Heart right ventricle (tissue), 16 donors: ENCODE measurements at regions of chr17 and their contacts with region 1.

Region 1: GRCh38 chr17:81253358-81254131 is 14.4 kb downstream of the NDUFAF8 start:
- DNase-seq: peak in 1 of 2 donors; percentile 54
- ATAC-seq: peak in 5 of 8 donors; percentile 35 to 55 (median 46)
- H3K4me3 ChIP-seq: no peak overlapping the region
- H3K27ac ChIP-seq: no peak overlapping the region
- H3K4me1 ChIP-seq: peaks cover 4 to 24% (median 13%) of the 10 kb centered on the region in 9 donors
- H3K27me3 ChIP-seq: no peaks in the 10 kb centered on the region
- CTCF ChIP-seq: peak; percentile 67 to 86 (median 79)

Region 2: GRCh38 chr17:80970044-80970761 is 283.3 kb before region 1 on chr17:
- intact Hi-C with region 1: no loop called
- DNase-seq: peak; percentile 51 to 57
- ATAC-seq: peak; percentile 66 to 84 (median 76)
- H3K4me3 ChIP-seq: no peak overlapping the region
- H3K27ac ChIP-seq: peak overlapping the region in 1 of 10 donors; percentile 19
- H3K4me1 ChIP-seq: peaks cover 4 to 27% (median 20%) of the 10 kb centered on the region in 9 donors
- H3K27me3 ChIP-seq: peaks cover 0 to 42% (median 15%) of the 10 kb centered on the region in 7 donors
- CTCF ChIP-seq: peak in 8 of 9 donors; percentile 43 to 72 (median 62)

Region 3: GRCh38 chr17:81222906-81223761 is 30.4 kb before region 1 on chr17 and contains the start of gene CEP131:
- intact Hi-C with region 1: no loop called
- DNase-seq: peak; percentile 99 to 100
- ATAC-seq: peak; percentile 98 to 100 (median 99)
- H3K4me3 ChIP-seq: peak within 1 kb of the TSS; percentile 69 to 93 (median 84)
- H3K27ac ChIP-seq: peak within 1 kb of the TSS in 4 of 10 donors; percentile 14 to 77 (median 62)
- H3K4me1 ChIP-seq: peaks cover 7 to 26% (median 17%) of the 10 kb centered on the region in 9 donors
- H3K27me3 ChIP-seq: no peaks in the 10 kb centered on the region
- CTCF ChIP-seq: peak in 1 of 9 donors; percentile 6
- total RNA-seq, gene CEP131: 6.4 to 14.4 (median 7.6) TPM

Region 4: DNA sequence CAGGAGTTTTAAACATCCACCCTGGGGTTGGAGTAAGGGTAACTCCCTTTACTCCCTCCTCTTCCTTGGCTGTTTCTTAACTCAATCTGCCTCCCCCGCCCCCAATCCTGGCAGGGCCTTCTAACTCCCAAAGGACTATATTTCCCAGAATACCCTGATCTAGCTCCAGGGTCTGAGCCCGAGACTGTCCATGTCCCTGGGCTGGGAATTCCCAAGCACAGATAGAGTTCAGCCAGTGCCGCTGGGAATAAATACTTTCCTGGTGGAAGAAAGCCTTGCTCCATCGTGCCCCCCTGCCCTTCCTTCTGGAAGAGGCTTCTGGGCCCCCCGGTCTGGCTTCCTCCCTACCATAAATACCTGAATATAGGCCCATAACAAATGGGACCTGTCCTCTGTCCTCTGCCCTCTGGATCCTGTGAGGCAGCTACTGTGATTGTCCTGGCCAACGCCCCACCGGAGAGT is 151.9 kb after region 1 on chr17:
- intact Hi-C with region 1: no loop called
- DNase-seq: peak in 1 of 2 donors; percentile 86
- ATAC-seq: peak; percentile 33 to 68 (median 46)
- H3K4me3 ChIP-seq: peak overlapping the region in 6 of 10 donors; percentile 6 to 75 (median 39)
- H3K27ac ChIP-seq: peak overlapping the region in 9 of 10 donors; percentile 92 to 99 (median 97)
- H3K4me1 ChIP-seq: peaks cover 43 to 80% (median 68%) of the 10 kb centered on the region in 9 donors
- H3K27me3 ChIP-seq: peaks cover 0 to 8% (median 0%) of the 10 kb centered on the region in 7 donors
- CTCF ChIP-seq: no peak

Region 5: GRCh38 chr17:81537343-81537855 is 283.9 kb after region 1 on chr17:
- intact Hi-C with region 1: loop called in 6 of 10 experiments (anchors 1 to 5 kb)
- DNase-seq: no peak
- ATAC-seq: peak; percentile 51 to 69 (median 60)
- H3K4me3 ChIP-seq: no peak overlapping the region
- H3K27ac ChIP-seq: no peak overlapping the region
- H3K4me1 ChIP-seq: peaks cover 3 to 18% (median 16%) of the 10 kb centered on the region in 9 donors
- H3K27me3 ChIP-seq: peaks cover 16 to 44% (median 40%) of the 10 kb centered on the region in 7 donors
- CTCF ChIP-seq: peak; percentile 54 to 73 (median 66)